AG04449 (cell line): ENCODE measurements at regions of chr1 and their contacts with region 1.

Region 1: GRCh38 chr1:198157241-198157846 is 546 bp downstream of the NEK7 start:
- DNase-seq: peak; percentile 77
- H3K4me3 ChIP-seq: peak overlapping the region; percentile 81
- CTCF ChIP-seq: no peak

Region 2: GRCh38 chr1:197663178-197663953 is 494.0 kb before region 1 on chr1:
- CTCF ChIA-PET with region 1: no interaction called
- POLR2A ChIA-PET with region 1: no interaction called
- DNase-seq: no peak
- H3K4me3 ChIP-seq: no peak overlapping the region
- CTCF ChIP-seq: no peak

Region 3: DNA sequence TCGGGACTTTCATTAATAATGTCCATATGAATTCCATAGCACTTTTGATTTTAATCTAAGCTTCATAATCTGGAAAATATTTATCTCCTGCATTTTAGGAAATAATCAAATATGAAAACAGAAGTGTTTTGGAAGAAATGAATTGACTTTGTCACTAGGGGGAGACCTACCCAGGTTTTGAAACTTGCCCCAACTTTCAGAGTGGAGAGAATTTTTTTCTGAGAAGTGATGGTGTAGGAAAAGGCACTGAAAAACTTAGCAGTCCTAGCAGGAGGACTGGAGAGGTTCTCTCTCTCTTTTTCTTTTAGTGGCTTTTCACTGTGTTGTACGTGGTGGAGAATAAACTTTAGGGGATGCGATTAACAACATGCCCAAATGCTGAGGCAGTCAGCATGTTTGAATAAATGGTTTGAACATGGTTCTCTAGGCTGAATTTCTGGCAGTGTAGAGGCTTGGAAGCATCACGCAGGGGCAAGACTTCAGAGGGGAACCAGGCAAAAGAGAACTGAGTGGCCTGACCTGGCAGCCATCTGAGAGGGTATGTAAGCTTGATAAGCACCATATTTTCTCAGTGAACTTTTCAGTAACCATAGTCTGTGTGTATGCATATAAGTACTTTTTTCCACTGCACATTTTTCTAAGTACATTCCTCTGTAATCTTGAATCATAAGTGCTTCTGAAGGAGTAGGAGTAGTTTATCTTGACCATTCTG is 68.8 kb before region 1 on chr1:
- CTCF ChIA-PET with region 1: interaction called, 10 read pairs
- POLR2A ChIA-PET with region 1: interaction called, 4 read pairs
- DNase-seq: no peak
- H3K4me3 ChIP-seq: peak overlapping the region; percentile 42
- CTCF ChIP-seq: peak; percentile 34

Region 4: DNA sequence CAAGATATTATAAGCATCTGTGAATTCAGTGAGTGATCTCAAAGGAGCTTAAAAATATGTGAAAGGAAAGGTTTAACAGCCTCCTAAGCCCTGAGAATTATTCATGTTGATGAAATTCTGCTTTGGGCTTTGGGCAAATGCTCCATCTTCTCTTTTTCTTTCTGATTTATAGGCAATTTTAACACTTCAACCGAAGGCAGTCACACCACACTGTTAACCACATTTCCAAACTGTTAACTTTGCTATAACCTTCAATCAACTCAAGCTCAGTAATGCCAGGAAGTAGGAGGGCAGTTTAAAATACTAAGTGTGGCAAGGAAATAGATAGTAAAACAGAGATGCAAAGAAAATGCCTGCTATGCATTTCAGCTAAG is 54.9 kb before region 1 on chr1:
- CTCF ChIA-PET with region 1: interaction called, 6 read pairs
- POLR2A ChIA-PET with region 1: interaction called, 13 read pairs
- DNase-seq: no peak
- H3K4me3 ChIP-seq: no peak overlapping the region
- CTCF ChIP-seq: no peak

Region 5: GRCh38 chr1:198118134-198118533 is 39.2 kb before region 1 on chr1:
- CTCF ChIA-PET with region 1: interaction called, 23 read pairs
- POLR2A ChIA-PET with region 1: interaction called, 30 read pairs
- DNase-seq: peak; percentile 91
- H3K4me3 ChIP-seq: no peak overlapping the region
- CTCF ChIP-seq: no peak

Region 6: DNA sequence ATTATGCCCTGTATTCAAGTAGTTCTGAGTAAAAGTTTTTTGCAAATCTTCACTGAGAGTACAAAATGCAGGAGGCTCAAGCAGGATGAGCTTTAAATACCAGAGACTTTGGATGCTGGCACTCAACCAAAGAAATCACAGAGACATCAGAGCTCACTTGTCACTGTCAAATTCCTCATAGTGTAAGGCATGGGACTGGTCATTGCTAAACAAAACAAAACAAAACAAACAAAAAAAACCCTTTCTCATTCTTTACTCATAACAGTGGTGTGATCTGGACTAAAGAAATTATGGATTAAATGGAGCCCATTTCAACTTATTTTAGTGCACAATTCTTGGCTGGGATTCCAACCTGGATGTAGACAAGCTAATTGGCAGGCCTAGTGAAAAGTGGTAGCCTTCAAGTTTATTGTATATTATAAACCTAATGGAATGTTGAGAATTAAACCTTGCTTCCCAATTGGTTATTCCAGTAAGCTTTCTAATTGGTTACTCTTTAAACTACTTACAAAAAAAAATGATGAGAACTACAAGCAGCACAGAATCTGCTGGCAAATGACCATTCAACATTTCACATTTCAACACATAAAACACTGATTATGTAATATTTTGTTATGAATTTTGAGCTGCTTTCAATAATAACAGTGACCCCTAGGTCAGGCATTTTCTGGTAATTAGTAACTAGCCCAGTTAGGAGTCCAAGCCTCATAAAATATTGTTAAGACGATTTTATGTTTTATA is 31.2 kb before region 1 on chr1:
- CTCF ChIA-PET with region 1: interaction called, 11 read pairs
- POLR2A ChIA-PET with region 1: interaction called, 6 read pairs
- DNase-seq: no peak
- H3K4me3 ChIP-seq: no peak overlapping the region
- CTCF ChIP-seq: no peak